Activated CD4-positive, alpha-beta T cell treated with anti-CD3 and anti-CD28 coated beads, Interleukin-2, amount 10 ng/mL, durations not matched to agents 24 days and 14 days (primary cell): ENCODE measurements at regions of chr1 and their contacts with region 1.

Region 1: DNA sequence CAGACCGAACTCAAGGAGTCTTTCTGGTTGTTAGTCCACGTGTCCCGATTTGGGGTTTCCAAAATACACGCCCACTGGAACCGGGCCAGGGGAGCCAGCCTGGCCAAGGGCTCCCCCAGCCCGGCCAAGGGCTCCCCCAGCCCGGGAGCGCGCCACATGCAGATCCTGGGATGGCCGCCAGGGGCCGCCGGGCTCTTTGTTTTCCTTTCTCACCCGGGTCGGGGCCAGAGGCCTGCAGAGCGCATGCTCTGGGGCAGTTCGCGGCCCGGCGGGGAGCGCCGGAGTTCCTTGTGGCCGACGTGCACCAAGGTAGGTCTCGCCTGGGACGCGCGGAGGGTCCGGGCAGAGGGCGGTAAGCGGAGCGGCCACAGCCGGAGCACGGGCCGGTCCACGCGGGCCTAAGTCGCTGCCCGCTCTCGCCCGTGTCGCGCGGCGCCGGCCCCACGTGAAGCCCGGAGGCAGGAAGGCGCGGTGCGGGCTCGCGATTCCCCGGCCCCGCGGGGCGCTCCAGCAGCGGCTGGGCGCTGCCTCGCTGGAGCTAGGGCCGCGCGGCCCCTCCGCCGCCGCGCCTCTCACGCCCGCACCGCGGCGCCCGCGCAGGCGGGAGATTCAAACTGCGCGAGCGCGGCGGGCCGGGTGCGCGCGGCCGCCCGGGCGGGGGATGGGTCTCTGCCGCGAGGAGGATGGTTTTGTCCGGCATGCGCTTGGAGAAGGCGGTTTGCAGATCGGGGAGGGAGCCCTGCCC is 12.3 kb downstream of the RCC1 start:
- DNase-seq: peak; percentile 98
- H3K4me3 Mint-ChIP-seq: peak overlapping the region; percentile 89
- H3K27ac Mint-ChIP-seq: peak overlapping the region; percentile 97
- H3K4me1 Mint-ChIP-seq: peaks cover 37% of the 10 kb centered on the region
- H3K27me3 Mint-ChIP-seq: no peaks in the 10 kb centered on the region

Region 2: GRCh38 chr1:28552758-28553663 is 34.8 kb after region 1 on chr1 and contains the start of gene TRNAU1AP:
- intact Hi-C with region 1: loop called (anchors 1 kb)
- DNase-seq: peak; percentile 99
- H3K4me3 Mint-ChIP-seq: peak within 1 kb of the TSS; percentile 100
- H3K27ac Mint-ChIP-seq: peak within 1 kb of the TSS; percentile 99
- H3K4me1 Mint-ChIP-seq: peaks cover 17% of the 10 kb centered on the region
- H3K27me3 Mint-ChIP-seq: no peaks in the 10 kb centered on the region
- total RNA-seq, gene TRNAU1AP: 47.5 and 50.7 TPM in 2 replicates

Region 3: GRCh38 chr1:28581536-28582247 is 63.5 kb after region 1 on chr1:
- intact Hi-C with region 1: loop called (anchors 1 kb)
- DNase-seq: peak; percentile 98
- H3K4me3 Mint-ChIP-seq: peak overlapping the region; percentile 94
- H3K27ac Mint-ChIP-seq: peak overlapping the region; percentile 97
- H3K4me1 Mint-ChIP-seq: peaks cover 29% of the 10 kb centered on the region
- H3K27me3 Mint-ChIP-seq: no peaks in the 10 kb centered on the region

Region 4: GRCh38 chr1:28602536-28603439 is 84.6 kb after region 1 on chr1:
- intact Hi-C with region 1: loop called (anchors 1 kb)
- DNase-seq: peak; percentile 79
- H3K4me3 Mint-ChIP-seq: no peak overlapping the region
- H3K27ac Mint-ChIP-seq: no peak overlapping the region
- H3K4me1 Mint-ChIP-seq: peaks cover 15% of the 10 kb centered on the region
- H3K27me3 Mint-ChIP-seq: no peaks in the 10 kb centered on the region

Region 5: GRCh38 chr1:28648474-28649198 is 130.5 kb after region 1 on chr1 and contains the start of gene RNU11:
- intact Hi-C with region 1: loop called (anchors 2 kb)
- DNase-seq: peak; percentile 96
- H3K4me3 Mint-ChIP-seq: peak within 1 kb of the TSS; percentile 80
- H3K27ac Mint-ChIP-seq: peak within 1 kb of the TSS; percentile 97
- H3K4me1 Mint-ChIP-seq: peaks cover 28% of the 10 kb centered on the region
- H3K27me3 Mint-ChIP-seq: no peaks in the 10 kb centered on the region
- total RNA-seq, gene RNU11: not detected in 2 replicates

Region 6: GRCh38 chr1:28877132-28877781 is 359.1 kb after region 1 on chr1:
- intact Hi-C with region 1: loop called (anchors 2 kb)
- DNase-seq: peak; percentile 93
- H3K4me3 Mint-ChIP-seq: no peak overlapping the region
- H3K27ac Mint-ChIP-seq: no peak overlapping the region
- H3K4me1 Mint-ChIP-seq: peaks cover 10% of the 10 kb centered on the region
- H3K27me3 Mint-ChIP-seq: peaks cover 15% of the 10 kb centered on the region

Region 7: GRCh38 chr1:29181413-29182225 is 663.4 kb after region 1 on chr1 and contains the start of gene SRSF4:
- intact Hi-C with region 1: loop called (anchors 5 kb)
- DNase-seq: peak; percentile 100
- H3K4me3 Mint-ChIP-seq: peak within 1 kb of the TSS; percentile 96
- H3K27ac Mint-ChIP-seq: peak within 1 kb of the TSS; percentile 97
- H3K4me1 Mint-ChIP-seq: peaks cover 44% of the 10 kb centered on the region
- H3K27me3 Mint-ChIP-seq: no peaks in the 10 kb centered on the region
- total RNA-seq, gene SRSF4: 138 and 141 TPM in 2 replicates